ENCODE measurements at regions of chr3 and their contacts with region 1.

Region 1: GRCh38 chr3:171335559-171335958 is 124.6 kb downstream of the TNIK start:
- DNase-seq: no peak
- ATAC-seq: no peak
- H3K4me3 ChIP-seq: no peak overlapping the region
- H3K4me3 Mint-ChIP-seq: no peak overlapping the region
- H3K27ac ChIP-seq: no peak overlapping the region
- H3K27ac Mint-ChIP-seq: no peak overlapping the region
- H3K4me1 ChIP-seq: no peaks in the 10 kb centered on the region
- H3K4me1 Mint-ChIP-seq: peaks cover 57 to 70% (median 60%) of the 10 kb centered on the region in 3 donors
- H3K27me3 ChIP-seq: no peaks in the 10 kb centered on the region
- H3K27me3 Mint-ChIP-seq: no peaks in the 10 kb centered on the region

Region 2: GRCh38 chr3:171293142-171293782 is 42.3 kb before region 1 on chr3:
- CTCF ChIA-PET with region 1: no interaction called
- POLR2A ChIA-PET with region 1: interaction called in 1 of 2 experiments, 11 read pairs
- DNase-seq: no peak
- ATAC-seq: peak in 1 of 4 experiments; percentile 42
- H3K4me3 ChIP-seq: no peak overlapping the region
- H3K4me3 Mint-ChIP-seq: peak overlapping the region in 1 of 3 donors; percentile 21
- H3K27ac ChIP-seq: no peak overlapping the region
- H3K27ac Mint-ChIP-seq: peak overlapping the region; percentile 75 to 78
- H3K4me1 ChIP-seq: peaks cover 4 to 12% of the 10 kb centered on the region in 2 experiments
- H3K4me1 Mint-ChIP-seq: peaks cover 61 to 66% (median 66%) of the 10 kb centered on the region in 3 donors
- H3K27me3 ChIP-seq: no peaks in the 10 kb centered on the region
- H3K27me3 Mint-ChIP-seq: no peaks in the 10 kb centered on the region